Prostate gland (tissue), 2 donors: ENCODE measurements at regions of chr5 and their contacts with region 1.

Region 1: GRCh38 chr5:171484460-171484899 is 65.0 kb downstream of the FGF18 start:
- DNase-seq: no peak
- H3K4me3 ChIP-seq: no peak overlapping the region
- H3K27ac ChIP-seq: no peak overlapping the region
- H3K4me1 ChIP-seq: no peaks in the 10 kb centered on the region
- H3K27me3 ChIP-seq: no peaks in the 10 kb centered on the region
- CTCF ChIP-seq: peak in 3 of 4 experiments; percentile 18 to 62 (median 46)
- POLR2A ChIP-seq: no peak

Region 2: DNA sequence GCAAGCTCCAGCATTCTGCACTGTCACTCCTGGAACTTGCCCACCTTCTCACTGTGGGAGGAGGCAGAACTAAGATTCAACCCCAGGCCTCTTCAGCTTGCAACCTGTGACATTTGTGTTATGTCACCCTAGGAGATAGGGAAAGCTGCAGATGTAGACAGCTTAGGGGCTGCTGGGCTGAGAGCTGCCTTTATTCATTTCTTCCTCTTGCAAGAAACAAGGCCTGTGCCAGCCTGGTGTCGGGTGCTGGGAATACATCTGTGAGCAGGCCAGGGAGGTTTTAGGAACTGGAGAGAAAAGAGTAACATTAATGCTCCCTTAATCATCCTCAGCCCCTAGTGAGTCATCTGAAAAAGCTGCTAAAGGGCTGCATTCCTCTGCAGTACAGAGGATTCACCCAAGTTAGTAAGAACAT is 36.7 kb after region 1 on chr5:
- intact Hi-C with region 1: no loop called
- DNase-seq: no peak
- H3K4me3 ChIP-seq: no peak overlapping the region
- H3K27ac ChIP-seq: peak overlapping the region; percentile 33 to 58
- H3K4me1 ChIP-seq: no peaks in the 10 kb centered on the region
- H3K27me3 ChIP-seq: peaks cover 3% of the 10 kb centered on the region
- CTCF ChIP-seq: no peak
- POLR2A ChIP-seq: no peak

Region 3: GRCh38 chr5:171850324-171851285 is 366.1 kb after region 1 on chr5:
- intact Hi-C with region 1: loop called (anchors 10 kb)
- DNase-seq: no peak
- H3K4me3 ChIP-seq: no peak overlapping the region
- H3K27ac ChIP-seq: no peak overlapping the region
- H3K4me1 ChIP-seq: no peaks in the 10 kb centered on the region
- H3K27me3 ChIP-seq: no peaks in the 10 kb centered on the region
- CTCF ChIP-seq: peak in 1 of 4 experiments; percentile 18
- POLR2A ChIP-seq: no peak